CD4-positive, alpha-beta T cell (primary cell): ENCODE measurements at regions of chr20 and their contacts with region 1.

Region 1: GRCh38 chr20:38748097-38748860 is at the start of gene ACTR5:
- DNase-seq: peak; percentile 94 to 99 (median 97)
- ATAC-seq: peak; percentile 89
- H3K4me3 ChIP-seq: peak within 1 kb of the TSS; percentile 73
- H3K4me3 Mint-ChIP-seq: peak within 1 kb of the TSS; percentile 96
- H3K27ac ChIP-seq: peak within 1 kb of the TSS; percentile 79 to 95
- H3K27ac Mint-ChIP-seq: peak within 1 kb of the TSS; percentile 95
- H3K4me1 ChIP-seq: peaks cover 16% of the 10 kb centered on the region
- H3K4me1 Mint-ChIP-seq: peaks cover 27% of the 10 kb centered on the region
- H3K27me3 ChIP-seq: no peaks in the 10 kb centered on the region
- H3K27me3 Mint-ChIP-seq: peaks cover 5% of the 10 kb centered on the region
- CTCF ChIP-seq: no peak
- total RNA-seq, gene ACTR5: 11.1 to 11.9 TPM

Region 2: GRCh38 chr20:38033310-38034107 is 714.8 kb before region 1 on chr20 and contains the starts of genes RPRD1B and TTI1:
- CTCF ChIA-PET with region 1: no interaction called
- POLR2A ChIA-PET with region 1: no interaction called
- intact Hi-C with region 1: loop called in 1 of 2 experiments (anchors 10 kb)
- DNase-seq: peak; percentile 74 to 94 (median 84)
- ATAC-seq: peak; percentile 84
- H3K4me3 ChIP-seq: peak within 1 kb of the TSS; percentile 79
- H3K4me3 Mint-ChIP-seq: peak within 1 kb of the TSS; percentile 99
- H3K27ac ChIP-seq: peak within 1 kb of the TSS; percentile 92 to 98
- H3K27ac Mint-ChIP-seq: peak within 1 kb of the TSS; percentile 100
- H3K4me1 ChIP-seq: peaks cover 38% of the 10 kb centered on the region
- H3K4me1 Mint-ChIP-seq: peaks cover 85% of the 10 kb centered on the region
- H3K27me3 ChIP-seq: no peaks in the 10 kb centered on the region
- H3K27me3 Mint-ChIP-seq: no peaks in the 10 kb centered on the region
- CTCF ChIP-seq: no peak
- total RNA-seq, gene RPRD1B: 54.8 to 55.7 TPM
- total RNA-seq, gene TTI1: 10.6 to 11.4 TPM

Region 3: DNA sequence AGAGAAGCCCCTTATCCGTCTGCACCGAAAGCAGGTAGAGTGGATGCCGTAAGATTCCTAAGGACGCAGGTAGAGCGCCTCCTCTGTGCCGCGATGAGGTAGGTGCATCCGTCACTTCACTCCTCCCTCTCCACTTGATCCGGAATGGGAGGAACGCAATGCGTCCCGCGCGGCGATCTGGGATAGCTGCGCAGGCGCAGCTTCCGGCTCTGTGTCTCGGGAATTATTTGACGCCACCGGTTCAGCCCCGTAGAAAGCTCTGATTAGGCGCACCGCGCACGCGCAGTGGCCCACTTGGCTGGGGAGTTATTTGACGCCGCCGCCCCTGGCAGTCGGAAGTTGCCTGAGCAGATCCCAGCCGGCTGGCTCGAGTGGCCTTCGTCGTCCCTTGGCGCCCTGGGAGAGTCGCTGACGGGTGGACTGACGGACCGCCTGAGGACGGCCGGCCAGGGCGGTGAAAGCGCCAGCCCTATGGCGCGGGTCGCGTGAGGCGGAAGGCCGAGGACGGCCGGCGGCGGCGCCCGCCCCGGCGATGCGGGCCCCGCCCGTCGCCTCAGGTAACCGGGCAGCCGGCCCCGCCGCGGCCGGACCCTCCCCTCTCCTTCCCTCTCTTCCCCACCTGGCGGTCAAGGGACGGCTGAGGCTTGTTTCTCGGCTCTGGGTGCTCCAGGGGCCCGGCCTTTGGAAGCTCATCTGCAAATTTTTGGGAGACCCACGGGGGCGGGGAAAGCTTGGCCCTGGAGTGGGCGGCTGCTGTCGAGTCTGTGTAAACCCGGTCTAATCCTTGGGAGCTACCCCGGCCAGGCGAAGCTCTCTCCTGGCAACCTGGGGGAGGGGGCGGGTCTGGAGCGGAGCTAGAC is 275.5 kb before region 1 on chr20 and contains the start of gene RALGAPB:
- CTCF ChIA-PET with region 1: no interaction called
- POLR2A ChIA-PET with region 1: no interaction called
- intact Hi-C with region 1: loop called in 1 of 2 experiments (anchors 5 kb)
- DNase-seq: peak; percentile 96 to 100 (median 98)
- ATAC-seq: peak; percentile 95
- H3K4me3 ChIP-seq: peak within 1 kb of the TSS; percentile 84
- H3K4me3 Mint-ChIP-seq: peak within 1 kb of the TSS; percentile 89
- H3K27ac ChIP-seq: peak within 1 kb of the TSS; percentile 37 to 81
- H3K27ac Mint-ChIP-seq: peak within 1 kb of the TSS; percentile 88
- H3K4me1 ChIP-seq: peaks cover 27% of the 10 kb centered on the region
- H3K4me1 Mint-ChIP-seq: peaks cover 58% of the 10 kb centered on the region
- H3K27me3 ChIP-seq: peaks cover 0 to 3% of the 10 kb centered on the region in 2 experiments
- H3K27me3 Mint-ChIP-seq: no peaks in the 10 kb centered on the region
- CTCF ChIP-seq: peak; percentile 61
- total RNA-seq, gene RALGAPB: 30.4 to 31.9 TPM

Region 4: DNA sequence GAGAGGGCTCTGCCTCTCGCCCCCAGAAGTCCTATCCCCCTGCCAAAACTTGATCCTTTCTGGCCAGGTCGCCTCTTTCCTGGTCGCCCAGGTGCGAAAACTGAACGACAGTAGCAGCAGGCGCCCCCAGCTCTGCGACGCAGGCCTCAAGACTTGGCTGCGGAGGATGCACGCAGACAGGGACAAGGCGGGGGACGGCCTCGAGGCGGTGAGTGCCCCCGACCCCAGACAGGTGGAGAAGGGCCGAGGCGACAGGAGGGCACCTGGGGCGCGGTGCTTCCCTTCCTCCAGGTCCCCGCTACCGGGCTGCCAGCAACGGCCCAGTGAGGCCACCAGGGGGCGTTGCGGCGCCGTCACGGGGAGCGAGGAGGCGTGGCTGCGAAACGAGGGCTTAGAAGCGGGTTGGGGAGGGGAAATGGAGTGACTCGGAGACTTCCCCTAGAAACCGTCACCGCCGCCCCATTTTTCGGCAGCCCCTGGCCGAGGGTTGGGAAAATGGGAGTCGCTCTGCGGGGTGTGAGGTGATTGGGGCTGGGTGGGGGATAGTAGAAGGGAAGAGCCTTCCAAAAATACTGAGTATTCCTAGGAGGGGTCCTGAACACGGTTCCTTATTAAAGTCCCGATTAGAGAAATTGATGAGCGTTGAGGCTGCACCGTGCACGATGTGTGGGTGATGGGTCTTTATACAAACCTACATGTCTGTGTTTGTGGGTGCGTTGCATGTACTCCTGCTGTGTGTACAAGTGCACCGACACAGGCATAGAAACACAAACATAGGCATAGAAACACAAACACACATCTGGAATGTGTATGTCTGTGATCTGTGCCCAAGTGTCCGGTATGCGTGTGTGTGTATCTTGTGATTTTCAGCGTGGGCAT is 102.1 kb before region 1 on chr20:
- CTCF ChIA-PET with region 1: interaction called, 3 read pairs
- POLR2A ChIA-PET with region 1: no interaction called
- intact Hi-C with region 1: loop called (anchors 1 kb)
- DNase-seq: peak; percentile 81 to 95 (median 90)
- ATAC-seq: peak; percentile 100
- H3K4me3 ChIP-seq: peak overlapping the region; percentile 24
- H3K4me3 Mint-ChIP-seq: peak overlapping the region; percentile 75
- H3K27ac ChIP-seq: no peak overlapping the region
- H3K27ac Mint-ChIP-seq: no peak overlapping the region
- H3K4me1 ChIP-seq: peaks cover 12% of the 10 kb centered on the region
- H3K4me1 Mint-ChIP-seq: peaks cover 8% of the 10 kb centered on the region
- H3K27me3 ChIP-seq: peaks cover 38 to 42% of the 10 kb centered on the region in 2 experiments
- H3K27me3 Mint-ChIP-seq: peaks cover 62% of the 10 kb centered on the region
- CTCF ChIP-seq: peak; percentile 93

Region 5: GRCh38 chr20:38805502-38805957 is 57.3 kb after region 1 on chr20 and contains the start of gene PPP1R16B:
- CTCF ChIA-PET with region 1: interaction called, 5 read pairs
- POLR2A ChIA-PET with region 1: interaction called, 10 read pairs
- intact Hi-C with region 1: loop called (anchors 2 kb)
- DNase-seq: peak; percentile 56 to 88 (median 73)
- ATAC-seq: peak; percentile 59
- H3K4me3 ChIP-seq: peak within 1 kb of the TSS; percentile 98
- H3K4me3 Mint-ChIP-seq: peak within 1 kb of the TSS; percentile 89
- H3K27ac ChIP-seq: peak within 1 kb of the TSS; percentile 96 to 100
- H3K27ac Mint-ChIP-seq: peak within 1 kb of the TSS; percentile 97
- H3K4me1 ChIP-seq: peaks cover 57% of the 10 kb centered on the region
- H3K4me1 Mint-ChIP-seq: peaks cover 55% of the 10 kb centered on the region
- H3K27me3 ChIP-seq: no peaks in the 10 kb centered on the region
- H3K27me3 Mint-ChIP-seq: no peaks in the 10 kb centered on the region
- CTCF ChIP-seq: no peak
- total RNA-seq, gene PPP1R16B: 87.6 to 91.1 TPM

Region 6: GRCh38 chr20:38926142-38926933 is 178.1 kb after region 1 on chr20 and contains the start of gene FAM83D:
- CTCF ChIA-PET with region 1: interaction called, 4 read pairs
- POLR2A ChIA-PET with region 1: interaction called, 3 read pairs
- intact Hi-C with region 1: loop called in 1 of 2 experiments (anchors 2 kb)
- DNase-seq: peak; percentile 83 to 97 (median 90)
- ATAC-seq: peak; percentile 95
- H3K4me3 ChIP-seq: peak within 1 kb of the TSS; percentile 74
- H3K4me3 Mint-ChIP-seq: peak within 1 kb of the TSS; percentile 90
- H3K27ac ChIP-seq: peak within 1 kb of the TSS in 1 of 2 donors; percentile 7
- H3K27ac Mint-ChIP-seq: peak within 1 kb of the TSS; percentile 76
- H3K4me1 ChIP-seq: peaks cover 37% of the 10 kb centered on the region
- H3K4me1 Mint-ChIP-seq: peaks cover 31% of the 10 kb centered on the region
- H3K27me3 ChIP-seq: no peaks in the 10 kb centered on the region
- H3K27me3 Mint-ChIP-seq: no peaks in the 10 kb centered on the region
- CTCF ChIP-seq: peak; percentile 43
- total RNA-seq, gene FAM83D: 1.8 to 1.9 TPM

Region 7: DNA sequence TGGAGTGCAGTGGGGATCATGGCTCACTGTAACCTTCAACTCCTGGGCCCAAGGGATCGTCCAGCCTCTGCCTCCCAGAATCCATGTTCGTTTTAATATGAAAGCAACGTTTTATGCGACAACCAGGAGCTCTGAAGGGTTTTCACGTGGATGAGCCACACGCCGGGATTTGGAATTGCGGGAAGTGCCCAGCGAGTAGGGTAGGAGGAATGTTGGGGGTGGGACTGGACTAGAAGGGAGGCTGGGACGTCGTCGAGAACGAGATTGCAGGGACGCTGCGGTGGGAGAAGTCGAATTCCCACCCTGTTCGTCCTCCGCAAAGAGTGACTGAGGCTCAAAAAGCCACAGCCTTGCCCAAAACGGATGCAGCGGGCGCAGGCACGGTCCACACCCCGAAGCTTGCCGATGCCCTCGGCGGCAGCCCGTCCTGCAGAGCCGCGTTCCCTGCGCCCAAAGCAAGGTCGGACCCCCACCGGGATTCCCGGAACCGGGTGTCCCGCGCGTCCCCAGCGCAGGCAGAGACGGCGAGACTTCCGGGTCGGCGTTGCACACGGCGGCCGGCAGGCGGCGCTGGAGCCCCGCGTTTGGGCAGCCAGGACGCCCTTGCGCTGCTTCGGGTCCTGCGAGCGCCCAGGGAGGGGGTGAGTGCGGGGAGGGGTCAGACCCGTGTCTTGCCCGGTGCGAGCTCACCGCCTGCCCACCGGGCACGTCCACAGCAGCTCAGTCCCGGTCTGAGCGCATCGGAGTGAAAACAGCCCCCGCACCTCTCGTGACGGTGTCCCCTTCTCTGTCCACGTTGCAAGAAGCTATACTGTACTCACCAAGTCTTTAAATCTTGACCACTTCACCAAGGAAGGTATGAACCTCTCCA is 301.6 kb after region 1 on chr20:
- CTCF ChIA-PET with region 1: interaction called, 3 read pairs
- POLR2A ChIA-PET with region 1: no interaction called
- intact Hi-C with region 1: loop called in 1 of 2 experiments (anchors 5 kb)
- DNase-seq: peak; percentile 55 to 90 (median 76)
- ATAC-seq: peak; percentile 88
- H3K4me3 ChIP-seq: peak overlapping the region; percentile 79
- H3K4me3 Mint-ChIP-seq: peak overlapping the region; percentile 84
- H3K27ac ChIP-seq: peak overlapping the region in 1 of 2 donors; percentile 35
- H3K27ac Mint-ChIP-seq: peak overlapping the region; percentile 25
- H3K4me1 ChIP-seq: peaks cover 15% of the 10 kb centered on the region
- H3K4me1 Mint-ChIP-seq: peaks cover 11% of the 10 kb centered on the region
- H3K27me3 ChIP-seq: peaks cover 0 to 2% of the 10 kb centered on the region in 2 experiments
- H3K27me3 Mint-ChIP-seq: no peaks in the 10 kb centered on the region
- CTCF ChIP-seq: peak; percentile 99